ENCODE measurements at regions of chr2 and their contacts with region 1.

Region 1: DNA sequence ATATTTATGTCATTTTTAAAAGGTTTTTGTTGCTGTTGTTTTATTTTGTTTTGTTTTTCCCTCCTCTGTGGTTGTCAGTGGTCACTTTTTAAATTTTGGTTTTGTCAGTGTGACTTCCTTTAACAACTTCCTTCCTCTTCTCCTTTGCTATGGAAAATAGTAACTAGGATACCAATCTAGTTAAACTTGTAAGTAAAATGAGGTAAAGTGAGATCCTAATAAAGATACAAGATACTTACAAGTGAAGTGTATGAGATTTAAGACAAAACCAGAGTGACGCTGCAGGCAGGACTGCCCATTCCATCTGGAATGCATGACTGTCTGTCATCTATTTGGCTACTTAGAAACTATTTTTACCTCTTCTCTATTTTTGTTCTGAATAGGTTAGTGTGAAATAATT is 30.6 kb upstream of the CREB1 start:
- DNase-seq: no peak
- ATAC-seq: no peak
- H3K4me3 ChIP-seq: no peak overlapping the region
- H3K27ac ChIP-seq: no peak overlapping the region
- H3K4me1 ChIP-seq: no peaks in the 10 kb centered on the region
- H3K27me3 ChIP-seq: no peaks in the 10 kb centered on the region
- CTCF ChIP-seq: no peak
- POLR2A ChIP-seq: no peak
- RAD21 ChIP-seq: no peak

Region 2: GRCh38 chr2:205596581-205596980 is 1902.5 kb before region 1 on chr2:
- CTCF ChIA-PET with region 1: no interaction called
- POLR2A ChIA-PET with region 1: no interaction called
- RAD21 ChIA-PET with region 1: no interaction called
- intact Hi-C with region 1: no loop called
- DNase-seq: no peak
- ATAC-seq: no peak
- H3K4me3 ChIP-seq: no peak overlapping the region
- H3K27ac ChIP-seq: no peak overlapping the region
- H3K4me1 ChIP-seq: no peaks in the 10 kb centered on the region
- H3K27me3 ChIP-seq: peaks cover 8% of the 10 kb centered on the region
- CTCF ChIP-seq: no peak
- POLR2A ChIP-seq: no peak
- RAD21 ChIP-seq: peak; percentile 3; the same call in 1 of the 2 replicates

Region 3: DNA sequence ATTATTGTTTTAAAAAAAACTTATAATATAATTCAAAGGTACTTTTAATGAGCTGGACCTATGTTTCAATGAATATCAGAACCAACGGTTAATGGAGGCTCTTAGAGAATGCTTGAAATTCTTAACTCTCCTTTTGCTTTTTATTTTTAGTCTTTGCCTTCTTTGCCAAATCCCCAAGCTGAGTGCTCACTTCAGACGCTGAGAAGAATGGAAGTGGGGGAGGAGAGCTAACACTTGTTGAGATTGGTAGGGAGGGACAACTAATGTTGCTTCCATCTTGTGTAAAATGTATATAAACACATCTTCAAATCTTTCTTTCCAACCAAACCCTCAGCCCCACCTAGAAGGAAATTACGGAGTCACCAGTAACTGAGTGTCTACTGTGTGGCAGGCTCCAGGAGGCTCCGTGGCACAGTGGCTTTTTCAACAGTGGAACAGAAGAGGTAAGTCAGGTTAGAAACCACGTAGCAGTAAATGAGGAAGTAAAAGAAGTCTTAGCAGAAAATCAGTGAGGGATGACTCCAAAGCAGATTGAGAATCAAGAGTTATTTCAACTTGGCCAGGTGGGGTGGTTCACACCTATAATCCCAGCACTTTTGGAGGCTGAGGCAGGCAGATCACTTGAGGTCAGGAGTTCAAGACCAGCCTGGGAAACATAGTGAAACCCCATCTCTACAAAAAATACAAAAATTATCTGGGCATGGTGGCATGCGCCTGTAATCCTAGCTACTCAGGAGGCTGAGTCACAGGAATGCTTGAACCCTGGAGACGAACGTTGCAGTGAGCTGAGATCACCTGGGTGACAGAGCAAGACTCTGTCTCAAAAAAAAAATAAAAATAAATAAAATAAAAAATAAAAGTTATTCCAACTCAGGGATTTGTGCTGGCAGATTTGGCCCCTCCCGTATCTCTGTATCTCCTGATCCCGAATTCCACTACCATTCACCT is 14.4 kb before region 1 on chr2:
- CTCF ChIA-PET with region 1: no interaction called
- POLR2A ChIA-PET with region 1: no interaction called
- RAD21 ChIA-PET with region 1: no interaction called
- intact Hi-C with region 1: loop called (anchors 1 kb)
- DNase-seq: no peak
- ATAC-seq: no peak
- H3K4me3 ChIP-seq: no peak overlapping the region
- H3K27ac ChIP-seq: no peak overlapping the region
- H3K4me1 ChIP-seq: peaks cover 0 to 15% of the 10 kb centered on the region in 2 experiments; a peak in 2 of 4 replicates
- H3K27me3 ChIP-seq: no peaks in the 10 kb centered on the region
- CTCF ChIP-seq: no peak
- POLR2A ChIP-seq: no peak
- RAD21 ChIP-seq: no peak